ENCODE measurements at regions of chr5 and their contacts with region 1.

Region 1: DNA sequence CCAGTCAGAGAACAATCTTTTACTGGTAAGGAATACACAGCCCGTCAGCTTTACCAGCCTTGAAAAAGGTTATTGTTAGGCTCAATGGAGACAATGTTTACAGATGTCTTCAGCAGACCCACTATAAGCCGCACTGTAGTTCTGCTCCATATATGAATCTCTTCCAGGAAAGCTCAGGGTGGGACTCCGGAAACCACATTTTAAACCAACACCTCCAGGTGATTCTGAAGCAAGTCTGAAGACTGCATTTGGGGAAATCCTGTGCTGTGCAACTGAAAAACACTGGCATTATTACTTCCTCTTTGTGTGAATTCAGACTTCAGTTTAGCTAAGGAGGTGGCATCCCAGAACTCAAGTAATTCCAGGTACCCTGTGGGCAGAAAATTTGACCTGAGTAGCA is 3.5 kb downstream of the GZMK start:
- DNase-seq: peak in 7 of 9 donors; percentile 10 to 51 (median 36)
- ATAC-seq: peak; percentile 82
- H3K4me3 ChIP-seq: peak overlapping the region; percentile 44
- H3K4me3 Mint-ChIP-seq: peak overlapping the region; percentile 60 to 84 (median 68)
- H3K27ac ChIP-seq: no peak overlapping the region
- H3K27ac Mint-ChIP-seq: peak overlapping the region in 8 of 9 donors; percentile 25 to 92 (median 76)
- H3K4me1 ChIP-seq: peaks cover 38 to 47% of the 10 kb centered on the region in 2 donors
- H3K4me1 Mint-ChIP-seq: peaks cover 37 to 89% (median 82%) of the 10 kb centered on the region in 7 donors
- H3K27me3 ChIP-seq: no peaks in the 10 kb centered on the region
- H3K27me3 Mint-ChIP-seq: no peaks in the 10 kb centered on the region

Region 2: GRCh38 chr5:54936201-54936600 is 91.4 kb before region 1 on chr5:
- CTCF ChIA-PET with region 1: no interaction called
- POLR2A ChIA-PET with region 1: no interaction called
- intact Hi-C with region 1: no loop called
- DNase-seq: no peak
- ATAC-seq: no peak
- H3K4me3 ChIP-seq: no peak overlapping the region
- H3K4me3 Mint-ChIP-seq: no peak overlapping the region
- H3K27ac ChIP-seq: no peak overlapping the region
- H3K27ac Mint-ChIP-seq: no peak overlapping the region
- H3K4me1 ChIP-seq: no peaks in the 10 kb centered on the region
- H3K4me1 Mint-ChIP-seq: peaks cover 0 to 2% (median 0%) of the 10 kb centered on the region in 7 donors
- H3K27me3 ChIP-seq: no peaks in the 10 kb centered on the region
- H3K27me3 Mint-ChIP-seq: peaks cover 8 to 53% (median 12%) of the 10 kb centered on the region in 5 donors

Region 3: DNA sequence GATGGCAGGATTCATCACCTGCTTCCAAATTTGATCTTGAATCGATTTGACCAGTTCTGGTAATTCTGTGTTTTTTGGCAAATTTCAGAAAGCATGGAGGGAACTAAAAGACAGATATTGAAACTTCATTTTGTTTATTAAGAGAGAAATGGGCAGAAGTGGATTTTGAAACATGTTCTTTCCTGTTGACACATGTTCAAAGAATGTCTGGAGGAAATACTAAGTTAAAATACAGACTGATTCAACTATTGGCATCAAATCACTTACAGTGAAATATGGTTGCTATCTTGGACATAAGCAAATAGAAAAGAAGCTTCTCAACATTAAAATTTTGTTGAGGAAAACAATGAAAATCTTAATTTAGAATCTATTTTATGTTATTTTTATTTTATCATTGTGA is 22.9 kb before region 1 on chr5:
- CTCF ChIA-PET with region 1: no interaction called
- POLR2A ChIA-PET with region 1: no interaction called
- intact Hi-C with region 1: loop called in 1 of 2 experiments (anchors 2 kb)
- DNase-seq: no peak
- ATAC-seq: no peak
- H3K4me3 ChIP-seq: no peak overlapping the region
- H3K4me3 Mint-ChIP-seq: no peak overlapping the region
- H3K27ac ChIP-seq: no peak overlapping the region
- H3K27ac Mint-ChIP-seq: no peak overlapping the region
- H3K4me1 ChIP-seq: peaks cover 0 to 8% of the 10 kb centered on the region in 2 donors
- H3K4me1 Mint-ChIP-seq: peaks cover 21 to 52% (median 36%) of the 10 kb centered on the region in 7 donors
- H3K27me3 ChIP-seq: no peaks in the 10 kb centered on the region
- H3K27me3 Mint-ChIP-seq: peaks cover 0 to 17% (median 0%) of the 10 kb centered on the region in 5 donors

Region 4: DNA sequence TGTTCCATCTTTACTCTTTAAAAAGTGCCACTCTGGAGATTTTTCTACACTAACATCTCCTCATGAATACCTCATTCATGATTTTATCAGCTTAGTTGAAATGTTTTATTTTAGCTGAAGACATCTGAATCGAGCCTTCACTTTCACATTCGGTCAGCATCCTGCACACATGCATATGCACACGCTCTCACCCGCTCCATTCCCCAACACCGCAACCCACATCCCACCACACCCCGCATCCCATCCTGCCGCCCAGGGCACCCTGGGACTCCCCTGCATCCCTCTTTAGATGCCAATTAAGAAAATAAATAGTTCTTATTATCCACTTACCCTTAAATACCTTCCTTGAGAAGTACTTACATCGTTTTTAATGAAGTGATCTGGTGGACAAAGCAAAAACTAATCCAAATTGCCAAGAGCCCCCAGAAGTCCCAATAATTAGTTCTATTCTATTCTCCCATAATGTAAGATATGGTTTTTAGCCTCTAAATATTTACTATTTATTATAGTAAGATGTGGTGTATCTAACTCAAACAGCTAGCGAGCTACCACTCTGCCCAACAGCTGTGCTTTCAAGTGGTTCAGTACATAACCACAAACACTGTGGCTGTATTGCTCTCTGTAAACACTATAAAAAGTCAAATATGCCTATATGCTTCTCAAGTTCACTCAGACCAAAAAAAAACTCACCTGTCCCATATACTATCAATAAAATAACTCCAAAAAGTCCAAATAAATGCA is 34.6 kb after region 1 on chr5:
- CTCF ChIA-PET with region 1: interaction called, 3 read pairs
- POLR2A ChIA-PET with region 1: interaction called, 3 read pairs
- intact Hi-C with region 1: loop called (anchors 1 to 5 kb)
- DNase-seq: peak in 7 of 9 donors; percentile 25 to 71 (median 46)
- ATAC-seq: peak; percentile 81
- H3K4me3 ChIP-seq: peak overlapping the region; percentile 33
- H3K4me3 Mint-ChIP-seq: peak overlapping the region; percentile 43 to 94 (median 82)
- H3K27ac ChIP-seq: no peak overlapping the region
- H3K27ac Mint-ChIP-seq: peak overlapping the region; percentile 17 to 98 (median 62)
- H3K4me1 ChIP-seq: peaks cover 26 to 30% of the 10 kb centered on the region in 2 donors
- H3K4me1 Mint-ChIP-seq: peaks cover 28 to 80% (median 67%) of the 10 kb centered on the region in 7 donors
- H3K27me3 ChIP-seq: no peaks in the 10 kb centered on the region
- H3K27me3 Mint-ChIP-seq: peaks cover 0 to 7% (median 0%) of the 10 kb centered on the region in 5 donors

Region 5: GRCh38 chr5:55072666-55073065 is 45.1 kb after region 1 on chr5:
- CTCF ChIA-PET with region 1: no interaction called
- POLR2A ChIA-PET with region 1: interaction called, 5 read pairs
- intact Hi-C with region 1: loop called in 1 of 2 experiments (anchors 1 kb)
- DNase-seq: peak in 7 of 9 donors; percentile 48 to 81 (median 70)
- ATAC-seq: peak; percentile 90
- H3K4me3 ChIP-seq: peak overlapping the region; percentile 28
- H3K4me3 Mint-ChIP-seq: peak overlapping the region; percentile 22 to 77 (median 60)
- H3K27ac ChIP-seq: peak overlapping the region; percentile 40
- H3K27ac Mint-ChIP-seq: peak overlapping the region; percentile 47 to 95 (median 69)
- H3K4me1 ChIP-seq: peaks cover 27 to 35% of the 10 kb centered on the region in 2 donors
- H3K4me1 Mint-ChIP-seq: peaks cover 15 to 54% (median 43%) of the 10 kb centered on the region in 7 donors
- H3K27me3 ChIP-seq: no peaks in the 10 kb centered on the region
- H3K27me3 Mint-ChIP-seq: no peaks in the 10 kb centered on the region